ENCODE measurements at regions of chr15 and their contacts with region 1.

Region 1: DNA sequence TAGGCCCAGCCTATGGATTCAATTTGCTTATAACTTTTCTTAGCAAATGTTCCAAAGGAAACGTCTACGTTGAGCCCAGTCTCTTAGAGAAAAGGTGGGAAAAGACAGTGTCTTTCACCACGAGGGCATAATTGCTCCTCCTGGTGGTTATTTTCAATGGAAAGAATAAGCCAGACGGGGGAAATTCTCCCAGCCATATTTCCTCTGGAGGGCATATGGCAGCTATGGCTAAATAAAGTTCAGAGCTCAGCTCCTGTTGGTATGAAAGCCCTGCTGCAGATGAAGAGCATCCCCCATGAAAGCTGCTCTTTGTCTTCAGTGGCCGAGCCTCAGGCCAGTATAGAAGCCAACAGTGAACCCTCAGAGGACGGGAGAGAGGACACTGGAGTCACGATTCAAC is 297.9 kb downstream of the RYR3 start:
- DNase-seq: no peak
- H3K4me3 ChIP-seq: no peak overlapping the region
- H3K27ac ChIP-seq: no peak overlapping the region
- H3K4me1 ChIP-seq: no peaks in the 10 kb centered on the region
- H3K27me3 ChIP-seq: no peaks in the 10 kb centered on the region
- CTCF ChIP-seq: peak in 1 of 3 experiments; percentile 13
- EP300 ChIP-seq: no peak
- POLR2A ChIP-seq: no peak

Region 2: DNA sequence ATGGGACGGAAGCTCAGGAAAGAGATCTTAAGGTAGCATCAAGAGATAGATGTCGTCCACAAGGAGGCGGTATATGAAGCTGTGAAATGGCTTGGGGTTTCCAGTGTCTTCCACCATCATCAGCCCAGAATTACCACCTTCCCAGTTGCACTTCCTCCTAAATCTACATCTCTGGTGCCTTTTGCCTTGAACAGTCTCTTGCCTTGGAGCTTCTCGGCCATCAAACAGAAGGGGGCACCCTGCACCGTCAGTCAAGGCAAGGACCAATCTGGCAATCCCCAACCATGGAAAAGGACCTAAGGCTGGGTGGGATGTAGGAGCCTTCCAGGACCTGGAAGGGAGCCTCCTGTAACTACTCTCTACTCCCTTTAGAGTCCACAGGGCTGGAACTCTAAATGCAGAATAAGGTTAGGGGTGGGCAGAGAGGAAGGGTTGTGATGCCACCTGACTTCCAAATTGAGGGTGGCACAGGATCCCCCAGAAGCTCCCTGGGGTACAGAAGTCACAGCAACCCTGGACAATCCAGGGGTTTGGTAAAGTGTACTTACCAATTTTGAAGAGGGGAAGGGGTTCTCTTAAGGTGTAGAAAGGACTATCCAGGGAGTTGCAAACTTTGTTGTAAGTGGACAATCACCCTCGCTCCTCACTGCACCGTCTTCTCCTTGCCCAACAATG is 299.0 kb before region 1 on chr15:
- intact Hi-C with region 1: loop called (anchors 10 kb)
- DNase-seq: peak; percentile 75
- H3K4me3 ChIP-seq: peak overlapping the region; percentile 60 to 67 (median 62)
- H3K27ac ChIP-seq: peak overlapping the region in 1 of 4 donors; percentile 79
- H3K4me1 ChIP-seq: peaks cover 0 to 28% (median 27%) of the 10 kb centered on the region in 4 donors
- H3K27me3 ChIP-seq: peaks cover 0 to 22% (median 0%) of the 10 kb centered on the region in 4 donors
- CTCF ChIP-seq: peak in 2 of 3 experiments; percentile 18 to 26
- EP300 ChIP-seq: no peak
- POLR2A ChIP-seq: no peak

Measured in esophagus muscularis mucosa (tissue), 4 donors.